ENCODE measurements at regions of chr21 and their contacts with region 1.

Region 1: DNA sequence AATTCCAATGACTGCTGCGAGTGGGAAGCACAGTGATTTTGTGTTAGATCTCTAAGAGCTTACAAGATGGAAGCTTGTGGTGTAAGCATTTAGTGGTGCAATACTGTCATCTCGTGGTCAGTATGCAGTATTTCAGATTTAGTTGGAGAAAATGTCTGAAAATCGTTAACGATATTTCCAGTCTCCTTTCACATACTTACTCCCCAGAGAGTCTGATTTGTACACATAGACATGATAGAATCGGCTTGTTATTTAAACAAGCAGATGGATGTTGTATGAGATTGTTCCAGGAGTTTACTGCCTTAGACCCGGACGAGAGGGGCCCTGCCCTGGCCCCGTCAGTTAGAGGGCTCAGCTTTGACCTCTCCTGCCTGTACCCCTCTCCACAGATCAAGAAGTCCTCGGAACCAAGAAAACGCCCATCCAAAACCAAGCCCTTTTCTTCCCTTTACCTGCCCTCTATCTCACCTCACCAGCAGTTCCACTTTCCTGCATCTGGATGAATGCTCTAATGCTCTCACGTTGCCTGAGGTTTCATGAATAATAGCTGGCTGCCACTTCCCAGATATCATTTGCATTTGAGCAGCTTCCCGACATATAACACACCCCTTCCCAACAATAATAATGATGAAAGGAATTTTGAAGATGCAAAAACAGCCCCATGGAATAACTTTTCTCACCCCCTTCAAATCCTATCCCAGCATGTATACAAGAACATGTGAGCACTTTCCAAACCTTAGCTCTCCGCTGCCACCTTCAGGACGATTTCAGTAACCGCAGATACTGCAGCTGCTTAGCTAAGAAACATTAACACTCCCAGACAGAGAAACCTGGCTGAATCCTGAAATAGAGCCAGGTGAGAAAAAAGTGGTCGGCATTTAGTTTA is 247.3 kb downstream of the LTN1 start:
- DNase-seq: peak; percentile 66
- ATAC-seq: peak; percentile 85 to 93

Region 2: GRCh38 chr21:26850108-26850643 is 1895.2 kb before region 1 on chr21:
- intact Hi-C with region 1: loop called in 1 of 2 experiments (anchors 2 kb)
- DNase-seq: no peak
- ATAC-seq: no peak

Region 3: GRCh38 chr21:27700974-27701614 is 1044.3 kb before region 1 on chr21:
- intact Hi-C with region 1: loop called in 1 of 2 experiments (anchors 5 kb)
- DNase-seq: peak; percentile 89
- ATAC-seq: peak; percentile 88 to 91

Region 4: DNA sequence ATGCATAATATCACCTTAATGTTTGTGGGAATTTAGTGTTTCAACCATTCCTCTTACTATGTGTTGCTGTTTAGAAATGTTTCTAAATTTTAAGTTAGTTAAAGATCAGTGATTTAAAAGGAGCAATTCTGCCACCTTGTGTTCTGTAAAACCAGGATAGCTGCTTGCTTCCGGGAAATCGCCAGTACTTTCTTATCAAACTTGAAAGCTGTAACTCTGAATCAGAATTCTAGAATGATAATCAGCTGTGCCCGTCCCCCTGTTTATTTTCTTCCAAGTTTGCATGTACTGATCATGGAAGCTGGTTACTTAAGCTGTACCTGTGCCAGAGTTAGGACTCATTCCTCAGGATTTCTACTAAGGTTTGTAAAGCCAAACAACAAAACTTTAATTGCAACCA is 409.1 kb before region 1 on chr21:
- intact Hi-C with region 1: loop called in 1 of 2 experiments (anchors 2 kb)
- DNase-seq: peak; percentile 24
- ATAC-seq: peak; percentile 36 to 42

Region 5: GRCh38 chr21:28516991-28517592 is 228.3 kb before region 1 on chr21:
- intact Hi-C with region 1: loop called in 1 of 2 experiments (anchors 2 kb)
- DNase-seq: peak; percentile 68
- ATAC-seq: peak; percentile 92

Region 6: DNA sequence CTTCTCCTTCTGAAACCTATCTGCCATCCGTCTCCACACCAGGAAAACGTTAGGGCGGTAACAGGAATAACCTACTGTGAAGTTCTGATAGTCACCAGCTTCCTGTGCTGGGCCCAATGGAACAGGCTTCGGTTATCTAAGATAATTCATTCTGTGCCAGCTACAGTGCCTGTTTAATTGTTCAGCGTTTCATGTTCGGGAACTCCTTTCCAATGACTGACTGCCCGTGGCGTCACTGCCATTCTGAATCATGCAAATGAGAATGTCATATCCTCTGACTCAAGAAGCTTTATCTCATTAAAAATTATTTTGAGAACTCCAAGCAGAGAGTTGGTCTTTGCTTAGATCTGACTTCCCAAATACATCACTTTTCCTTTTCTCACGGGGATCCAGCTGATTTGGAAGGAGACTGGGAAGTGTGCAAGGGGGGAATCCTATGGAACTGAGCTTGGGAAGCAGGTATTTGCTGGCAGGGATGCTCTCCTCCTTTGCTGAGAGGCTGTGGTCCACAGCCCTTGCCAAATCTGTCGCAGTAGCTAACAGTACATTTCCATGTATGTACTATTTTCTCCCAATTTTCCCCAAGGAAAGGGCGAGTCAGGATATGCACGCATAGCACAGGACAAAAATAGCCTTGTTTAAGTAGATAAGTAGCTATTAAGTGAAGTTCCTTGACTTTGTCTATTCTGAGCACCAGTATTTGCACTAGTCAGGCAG is 111.4 kb before region 1 on chr21:
- intact Hi-C with region 1: loop called in 1 of 2 experiments (anchors 10 kb)
- DNase-seq: peak; percentile 81
- ATAC-seq: peak; percentile 58 to 85

Region 7: DNA sequence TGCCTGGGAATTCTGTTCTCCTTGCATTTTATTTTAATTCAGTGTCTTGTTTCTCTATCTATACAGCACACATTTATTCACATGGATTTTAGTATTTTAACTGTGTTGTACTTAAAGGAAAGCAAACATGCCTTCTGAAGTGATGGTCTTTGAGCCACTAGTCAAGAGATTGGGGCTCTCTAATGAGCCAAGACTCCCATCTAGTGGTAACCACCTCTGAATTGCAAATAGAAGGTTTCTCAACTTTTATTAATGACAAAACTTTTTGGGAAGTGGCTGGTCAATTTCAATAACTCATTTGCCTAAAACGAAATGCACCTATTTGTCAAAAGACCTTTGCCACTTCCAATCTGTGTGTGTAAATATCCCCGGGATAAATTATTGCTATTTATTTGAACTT is 47.7 kb after region 1 on chr21:
- intact Hi-C with region 1: loop called in 1 of 2 experiments (anchors 5 kb)
- DNase-seq: no peak
- ATAC-seq: peak in 1 of 2 donors; percentile 68

Measured in left cardiac atrium (tissue), 4 donors.